ENCODE measurements at regions of chr17 and their contacts with region 1.

Region 1: GRCh38 chr17:39699818-39700147 is at the start of gene ERBB2:
- DNase-seq: peak; percentile 92 to 93
- ATAC-seq: peak; percentile 71 to 87
- H3K4me3 ChIP-seq: peak within 1 kb of the TSS; percentile 78
- H3K27ac ChIP-seq: peak within 1 kb of the TSS; percentile 79 to 97
- H3K4me1 ChIP-seq: peaks cover 59% of the 10 kb centered on the region
- CTCF ChIP-seq: no peak
- EP300 ChIP-seq: no peak
- POLR2A ChIP-seq: peak; percentile 77
- RAD21 ChIP-seq: no peak
- polyA plus RNA-seq, gene ERBB2: 22.4 and 34.8 TPM in 2 replicates

Region 2: GRCh38 chr17:39573447-39574298 is 126.1 kb before region 1 on chr17:
- CTCF ChIA-PET with region 1: no interaction called
- POLR2A ChIA-PET with region 1: no interaction called
- DNase-seq: peak; percentile 81 to 95
- ATAC-seq: peak; percentile 91 to 96
- H3K4me3 ChIP-seq: peak overlapping the region; percentile 57
- H3K27ac ChIP-seq: peak overlapping the region; percentile 74 to 90
- H3K4me1 ChIP-seq: peaks cover 5% of the 10 kb centered on the region; the same call in 2 of the 3 replicates
- CTCF ChIP-seq: no peak
- EP300 ChIP-seq: no peak
- POLR2A ChIP-seq: peak; percentile 44
- RAD21 ChIP-seq: no peak

Region 3: DNA sequence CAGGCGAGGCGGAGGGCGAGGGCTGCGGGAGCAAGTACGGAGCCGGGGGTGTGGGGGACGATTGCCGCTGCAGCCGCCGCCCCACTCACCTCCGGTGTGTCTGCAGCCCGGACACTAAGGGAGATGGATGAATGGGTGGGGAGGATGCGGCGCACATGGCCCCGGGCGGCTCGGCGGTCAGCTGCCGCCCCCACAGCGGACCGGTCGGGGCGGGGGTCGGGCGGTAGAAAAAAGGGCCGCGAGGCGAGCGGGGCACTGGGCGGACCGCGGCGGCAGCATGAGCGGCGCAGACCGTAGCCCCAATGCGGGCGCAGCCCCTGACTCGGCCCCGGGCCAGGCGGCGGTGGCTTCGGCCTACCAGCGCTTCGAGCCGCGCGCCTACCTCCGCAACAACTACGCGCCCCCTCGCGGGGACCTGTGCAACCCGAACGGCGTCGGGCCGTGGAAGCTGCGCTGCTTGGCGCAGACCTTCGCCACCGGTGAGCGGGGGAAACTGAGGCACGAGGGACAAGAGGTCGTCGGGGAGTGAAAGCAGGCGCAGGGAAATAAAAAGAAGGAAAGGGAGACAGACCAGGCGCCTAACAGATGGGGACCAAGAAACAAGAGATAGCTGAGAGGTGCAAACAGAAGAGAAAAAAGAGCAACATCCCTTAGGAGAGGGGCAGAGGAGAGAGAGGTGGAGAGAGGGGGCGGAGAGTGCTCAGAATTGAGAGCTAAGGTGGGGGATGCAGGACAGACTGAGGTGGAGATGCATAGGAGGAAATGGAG is 31.4 kb before region 1 on chr17 and contains the start of gene PNMT:
- CTCF ChIA-PET with region 1: interaction called, 236 read pairs
- POLR2A ChIA-PET with region 1: interaction called, 4 read pairs
- DNase-seq: peak; percentile 78 to 84
- ATAC-seq: peak; percentile 30 to 52; a peak in 5 of 6 replicates
- H3K4me3 ChIP-seq: peak within 1 kb of the TSS; percentile 38
- H3K27ac ChIP-seq: peak within 1 kb of the TSS; percentile 74 to 89; a peak in 5 of 6 replicates
- H3K4me1 ChIP-seq: peaks cover 48% of the 10 kb centered on the region
- CTCF ChIP-seq: peak; percentile 68
- EP300 ChIP-seq: no peak
- POLR2A ChIP-seq: no peak
- RAD21 ChIP-seq: peak; percentile 43 to 49
- polyA plus RNA-seq, gene PNMT: not detected in 2 replicates

Region 4: GRCh38 chr17:39677542-39678339 is 22.0 kb before region 1 on chr17:
- CTCF ChIA-PET with region 1: interaction called, 236 read pairs
- POLR2A ChIA-PET with region 1: interaction called, 3 read pairs
- DNase-seq: no peak
- ATAC-seq: no peak
- H3K4me3 ChIP-seq: no peak overlapping the region
- H3K27ac ChIP-seq: no peak overlapping the region
- H3K4me1 ChIP-seq: peaks cover 21% of the 10 kb centered on the region; the same call in 2 of the 3 replicates
- CTCF ChIP-seq: no peak
- EP300 ChIP-seq: no peak
- POLR2A ChIP-seq: no peak
- RAD21 ChIP-seq: no peak

Region 5: DNA sequence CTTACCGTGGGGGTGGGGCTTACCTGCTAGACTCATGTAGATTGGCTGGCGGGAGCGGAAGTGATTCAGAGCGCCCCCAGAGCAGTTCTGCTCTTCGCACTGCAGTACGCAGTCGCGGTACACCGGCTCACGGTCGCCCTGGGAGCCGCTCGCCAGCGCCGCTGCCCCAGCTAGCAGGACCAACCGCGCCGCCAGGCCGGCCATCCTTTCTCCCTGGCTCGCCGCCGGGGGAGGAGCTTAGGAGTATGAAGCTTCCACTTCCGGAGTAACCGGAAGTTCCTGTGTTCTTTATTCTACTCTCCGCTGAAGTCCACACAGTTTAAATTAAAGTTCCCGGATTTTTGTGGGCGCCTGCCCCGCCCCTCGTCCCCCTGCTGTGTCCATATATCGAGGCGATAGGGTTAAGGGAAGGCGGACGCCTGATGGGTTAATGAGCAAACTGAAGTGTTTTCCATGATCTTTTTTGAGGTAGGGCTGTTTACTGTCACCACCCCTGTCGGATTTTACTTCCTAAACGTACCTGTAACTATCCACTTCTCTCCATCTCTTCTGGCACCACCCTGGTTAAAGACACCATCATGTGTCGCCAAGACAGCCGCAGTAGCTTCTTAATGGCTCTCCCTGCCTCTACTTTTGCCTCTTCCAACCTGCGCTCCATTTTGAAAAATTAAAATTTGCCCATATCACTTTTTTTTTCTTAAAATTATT is 11.8 kb before region 1 on chr17 and contains the start of gene PGAP3:
- CTCF ChIA-PET with region 1: interaction called, 12 read pairs
- POLR2A ChIA-PET with region 1: interaction called, 60 read pairs
- DNase-seq: peak; percentile 96 to 99
- ATAC-seq: peak; percentile 96 to 97
- H3K4me3 ChIP-seq: peak within 1 kb of the TSS; percentile 61
- H3K27ac ChIP-seq: peak within 1 kb of the TSS; percentile 80 to 92
- H3K4me1 ChIP-seq: peaks cover 7% of the 10 kb centered on the region
- CTCF ChIP-seq: 0 out of 3 replicates have a peak, but pooled peaks have one; percentile 5
- EP300 ChIP-seq: no peak
- POLR2A ChIP-seq: peak; percentile 66
- RAD21 ChIP-seq: no peak; a peak in 1 of 5 replicates
- polyA plus RNA-seq, gene PGAP3: 8.5 and 10.6 TPM in 2 replicates

Region 6: DNA sequence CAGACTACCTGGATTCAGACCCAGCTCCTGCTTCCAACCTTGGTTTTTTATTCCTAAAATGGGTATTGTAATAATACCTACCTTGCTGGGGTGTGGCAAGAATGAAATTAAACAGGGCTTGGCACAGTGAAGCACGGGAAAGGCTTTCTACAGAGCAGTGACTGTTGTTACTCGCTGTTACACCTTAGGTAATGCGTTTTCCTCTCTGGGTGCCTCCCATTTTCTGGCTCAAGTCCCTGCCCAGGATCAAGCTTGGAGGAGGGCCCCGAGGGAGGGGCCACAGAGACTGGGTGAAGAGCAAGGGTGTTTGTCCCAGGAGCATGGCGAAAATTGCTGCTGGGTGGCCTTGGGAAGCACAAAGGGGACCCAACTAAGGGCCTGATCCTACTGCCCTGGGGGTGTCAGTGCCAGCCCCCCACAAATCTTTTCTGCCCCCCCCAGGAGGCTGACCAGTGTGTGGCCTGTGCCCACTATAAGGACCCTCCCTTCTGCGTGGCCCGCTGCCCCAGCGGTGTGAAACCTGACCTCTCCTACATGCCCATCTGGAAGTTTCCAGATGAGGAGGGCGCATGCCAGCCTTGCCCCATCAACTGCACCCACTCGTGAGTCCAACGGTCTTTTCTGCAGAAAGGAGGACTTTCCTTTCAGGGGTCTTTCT is 17.2 kb after region 1 on chr17:
- CTCF ChIA-PET with region 1: interaction called, 13 read pairs
- POLR2A ChIA-PET with region 1: interaction called, 4 read pairs
- DNase-seq: no peak
- ATAC-seq: 0 out of 6 replicates have a peak, but pooled peaks of 1 of the 2 experiments have one; percentile 10
- H3K4me3 ChIP-seq: no peak overlapping the region
- H3K27ac ChIP-seq: no peak overlapping the region
- H3K4me1 ChIP-seq: no peaks in the 10 kb centered on the region
- CTCF ChIP-seq: no peak
- EP300 ChIP-seq: no peak
- POLR2A ChIP-seq: no peak
- RAD21 ChIP-seq: no peak

Measured in A549 (cell line).